ENCODE measurements at regions of chr18 and their contacts with region 1.

Region 1: DNA sequence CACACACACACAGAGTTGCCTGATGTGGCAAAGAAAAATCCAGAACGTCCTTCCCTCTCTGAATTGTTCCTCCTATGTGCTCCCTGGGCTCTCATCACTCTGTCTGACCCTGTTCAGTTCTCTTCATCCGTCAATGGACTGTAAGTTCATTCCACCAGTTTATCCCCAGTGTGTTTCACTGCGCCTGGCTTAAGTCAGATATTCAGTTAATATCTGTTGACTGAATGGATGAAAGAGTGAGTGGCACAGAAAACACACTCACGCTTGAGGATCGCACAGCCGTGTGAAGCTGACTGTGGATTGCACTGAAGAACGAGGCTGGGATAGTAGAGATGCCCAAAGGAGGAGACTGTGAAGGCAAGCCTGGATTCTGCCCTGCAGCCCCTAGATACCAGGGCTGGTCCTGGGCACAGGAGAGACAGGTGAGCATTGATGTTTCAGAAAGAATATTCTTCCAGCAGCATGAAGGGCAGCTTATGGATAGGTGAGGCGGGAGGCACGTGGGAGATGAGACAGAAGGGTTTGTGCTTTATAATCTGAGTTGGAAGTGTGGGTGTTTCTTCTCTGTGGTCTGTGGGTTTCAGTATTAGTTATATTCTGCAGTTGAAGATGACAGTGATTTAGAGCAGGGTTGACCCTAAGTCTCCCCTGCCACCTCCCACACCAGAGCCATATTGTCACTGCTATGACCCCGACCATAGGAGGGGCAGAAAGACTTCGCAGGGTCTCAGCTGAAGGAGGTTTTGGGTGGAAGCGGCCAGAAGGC is 129.9 kb downstream of the SOCS6 start:
- DNase-seq: no peak
- H3K4me3 ChIP-seq: no peak overlapping the region
- H3K4me3 Mint-ChIP-seq: peak overlapping the region; percentile 37
- H3K27ac Mint-ChIP-seq: peak overlapping the region; percentile 90
- H3K4me1 ChIP-seq: peaks cover 18% of the 10 kb centered on the region; the same call in 1 of the 2 replicates
- H3K4me1 Mint-ChIP-seq: peaks cover 33% of the 10 kb centered on the region
- H3K27me3 ChIP-seq: no peaks in the 10 kb centered on the region
- H3K27me3 Mint-ChIP-seq: no peaks in the 10 kb centered on the region
- CTCF ChIP-seq: no peak

Region 2: GRCh38 chr18:70085641-70086040 is 333.1 kb before region 1 on chr18:
- CTCF ChIA-PET with region 1: no interaction called
- POLR2A ChIA-PET with region 1: no interaction called
- intact Hi-C with region 1: no loop called
- DNase-seq: no peak
- H3K4me3 ChIP-seq: no peak overlapping the region
- H3K4me3 Mint-ChIP-seq: no peak overlapping the region
- H3K27ac Mint-ChIP-seq: no peak overlapping the region
- H3K4me1 ChIP-seq: no peaks in the 10 kb centered on the region
- H3K4me1 Mint-ChIP-seq: no peaks in the 10 kb centered on the region
- H3K27me3 ChIP-seq: no peaks in the 10 kb centered on the region
- H3K27me3 Mint-ChIP-seq: no peaks in the 10 kb centered on the region
- CTCF ChIP-seq: no peak

Region 3: DNA sequence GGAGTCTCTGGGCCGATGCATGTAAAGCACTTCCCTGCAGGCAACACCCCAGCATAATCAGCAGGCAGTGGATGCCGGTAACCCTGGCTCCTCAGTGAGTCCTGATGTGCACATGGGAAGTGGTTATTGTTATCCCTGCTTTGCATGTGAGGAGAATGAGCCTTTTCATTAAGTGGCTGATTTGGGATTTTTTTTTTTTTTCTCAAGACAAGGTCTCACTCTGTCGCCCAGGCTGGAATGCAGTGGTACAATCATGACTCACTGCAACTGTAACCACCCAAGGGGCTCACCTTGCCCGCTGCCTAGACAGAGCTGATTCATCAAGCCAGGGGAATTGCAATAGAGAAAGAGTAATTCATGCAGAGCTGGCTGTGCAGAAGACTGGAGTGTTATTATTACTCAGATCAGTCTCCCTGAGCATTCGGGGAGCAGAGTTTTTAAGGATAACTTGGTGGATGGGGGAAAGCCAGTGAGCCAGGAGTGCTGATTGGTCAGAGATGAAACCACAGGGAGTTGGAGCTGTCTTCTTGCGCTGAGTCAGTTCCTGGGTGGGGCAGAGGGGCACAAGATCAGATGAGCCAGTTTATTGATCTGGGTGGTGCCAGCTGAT is 34.4 kb before region 1 on chr18:
- CTCF ChIA-PET with region 1: no interaction called
- POLR2A ChIA-PET with region 1: interaction called, 16 read pairs
- intact Hi-C with region 1: loop called (anchors 5 kb)
- DNase-seq: peak in 1 of 2 experiments; percentile 28
- H3K4me3 ChIP-seq: no peak overlapping the region
- H3K4me3 Mint-ChIP-seq: no peak overlapping the region
- H3K27ac Mint-ChIP-seq: peak overlapping the region; percentile 72
- H3K4me1 ChIP-seq: peaks cover 22% of the 10 kb centered on the region
- H3K4me1 Mint-ChIP-seq: peaks cover 16% of the 10 kb centered on the region
- H3K27me3 ChIP-seq: no peaks in the 10 kb centered on the region
- H3K27me3 Mint-ChIP-seq: no peaks in the 10 kb centered on the region
- CTCF ChIP-seq: no peak

Measured in Caco-2 (cell line).